GM12878 (cell line): ENCODE measurements at regions of chr11 and their contacts with region 1.

Region 1: GRCh38 chr11:35822815-35823495 is 120.9 kb upstream of the LDLRAD3 start:
- DNase-seq: no peak
- ATAC-seq: no peak
- H3K4me3 ChIP-seq: no peak overlapping the region
- H3K27ac ChIP-seq: no peak overlapping the region
- H3K4me1 ChIP-seq: no peaks in the 10 kb centered on the region
- H3K27me3 ChIP-seq: no peaks in the 10 kb centered on the region
- CTCF ChIP-seq: no peak
- EP300 ChIP-seq: no peak
- POLR2A ChIP-seq: no peak
- RAD21 ChIP-seq: no peak

Region 2: DNA sequence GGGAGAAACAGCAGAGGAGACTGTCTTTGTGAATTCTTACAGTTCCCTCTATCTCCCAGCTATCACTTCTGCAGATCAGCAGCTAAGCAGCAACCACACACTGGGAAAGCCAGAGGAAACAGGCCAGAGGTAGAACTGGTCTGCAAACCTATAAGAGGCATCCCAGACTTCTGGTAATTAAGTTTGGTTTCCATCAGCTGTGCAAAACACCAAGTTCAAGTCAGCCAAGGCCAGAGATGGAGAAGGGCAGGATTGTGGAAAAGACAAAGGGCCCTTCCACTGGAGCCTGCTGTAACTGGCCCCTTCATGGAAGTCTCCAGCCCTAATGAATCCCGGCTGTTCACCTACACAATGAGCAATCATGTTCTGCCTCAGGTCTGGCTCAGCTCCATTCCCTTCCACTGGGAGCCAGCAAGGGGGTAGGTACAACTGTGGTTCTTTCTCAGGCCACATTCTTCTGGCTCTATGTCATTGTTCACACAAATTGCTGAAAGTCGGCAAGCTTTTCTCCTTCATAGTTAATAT is 292.9 kb before region 1 on chr11:
- CTCF ChIA-PET with region 1: no interaction called
- POLR2A ChIA-PET with region 1: no interaction called
- RAD21 ChIA-PET with region 1: no interaction called
- SMC1A ChIA-PET with region 1: no interaction called
- in situ Hi-C with region 1: no loop called
- intact Hi-C with region 1: no loop called
- DNase-seq: no peak
- ATAC-seq: no peak
- H3K4me3 ChIP-seq: no peak overlapping the region
- H3K27ac ChIP-seq: no peak overlapping the region
- H3K4me1 ChIP-seq: no peaks in the 10 kb centered on the region
- H3K27me3 ChIP-seq: peaks cover 4 to 6% of the 10 kb centered on the region in 2 experiments
- CTCF ChIP-seq: no peak
- EP300 ChIP-seq: no peak
- POLR2A ChIP-seq: no peak
- RAD21 ChIP-seq: no peak

Region 3: GRCh38 chr11:35714882-35715627 is 107.9 kb before region 1 on chr11:
- CTCF ChIA-PET with region 1: interaction called, 13 read pairs
- POLR2A ChIA-PET with region 1: no interaction called
- RAD21 ChIA-PET with region 1: interaction called, 20 read pairs
- SMC1A ChIA-PET with region 1: interaction called, 15 read pairs
- in situ Hi-C with region 1: no loop called
- intact Hi-C with region 1: no loop called
- DNase-seq: peak; percentile 77
- ATAC-seq: peak; percentile 91
- H3K4me3 ChIP-seq: no peak overlapping the region
- H3K27ac ChIP-seq: no peak overlapping the region; the same call in 1 of the 2 replicates
- H3K4me1 ChIP-seq: peaks cover 8% of the 10 kb centered on the region; the same call in 1 of the 2 replicates
- H3K27me3 ChIP-seq: no peaks in the 10 kb centered on the region
- CTCF ChIP-seq: no peak
- EP300 ChIP-seq: peak; percentile 47 to 55; a peak in 2 of 4 replicates
- POLR2A ChIP-seq: no peak
- RAD21 ChIP-seq: peak; percentile 13; the same call in 1 of the 2 replicates

Region 4: DNA sequence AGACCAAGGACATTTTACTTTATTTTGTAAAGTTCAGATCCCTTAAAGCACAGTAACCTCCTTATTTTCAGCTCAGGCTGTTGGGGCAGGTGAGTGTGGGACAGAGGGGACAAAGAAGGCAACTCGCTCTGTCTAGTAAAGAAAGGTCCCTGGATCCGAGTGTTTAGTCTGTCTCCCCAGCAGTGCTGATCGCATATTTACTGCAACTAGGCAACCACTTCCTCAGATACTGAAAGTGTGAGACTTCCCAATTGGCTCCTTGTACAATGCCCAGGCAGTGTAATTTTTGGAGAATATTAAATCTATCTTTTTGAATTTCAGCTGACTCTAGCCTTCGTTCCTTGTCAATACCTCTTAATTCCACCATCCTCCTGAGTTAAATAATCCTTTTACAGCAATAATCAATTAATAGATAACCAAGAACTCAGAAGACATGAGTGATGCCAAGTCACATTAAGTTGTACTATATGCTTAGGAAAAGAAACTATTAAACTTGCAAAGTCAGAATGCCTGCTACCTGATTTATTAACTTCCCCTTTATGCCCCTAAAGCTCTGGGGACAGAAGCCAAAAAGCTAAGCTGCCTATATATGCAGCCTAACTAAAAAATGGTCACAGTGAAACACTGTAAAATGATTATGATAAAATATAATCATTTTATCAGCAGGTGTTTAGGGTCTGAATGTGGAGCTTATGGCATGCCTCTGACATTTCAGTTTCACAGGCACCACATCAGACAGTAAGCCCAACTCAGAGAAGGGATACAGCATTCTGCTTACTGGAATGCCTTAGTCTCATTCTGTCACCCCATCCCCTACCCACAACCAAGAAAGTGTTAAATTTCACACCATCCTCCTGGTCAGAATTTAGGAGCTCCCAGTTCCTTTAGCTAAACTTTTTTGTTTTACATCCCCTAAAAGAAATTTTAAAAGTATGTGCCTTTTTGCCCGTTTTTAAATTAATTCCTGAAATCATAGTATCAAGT is 21.7 kb before region 1 on chr11:
- CTCF ChIA-PET with region 1: interaction called, 26 read pairs
- POLR2A ChIA-PET with region 1: no interaction called
- RAD21 ChIA-PET with region 1: interaction called, 12 read pairs
- SMC1A ChIA-PET with region 1: interaction called, 14 read pairs
- in situ Hi-C with region 1: no loop called
- intact Hi-C with region 1: no loop called
- DNase-seq: no peak
- ATAC-seq: peak; percentile 88
- H3K4me3 ChIP-seq: no peak overlapping the region
- H3K27ac ChIP-seq: peak overlapping the region; percentile 6; the same call in 1 of the 2 replicates
- H3K4me1 ChIP-seq: peaks cover 4% of the 10 kb centered on the region
- H3K27me3 ChIP-seq: no peaks in the 10 kb centered on the region
- CTCF ChIP-seq: no peak
- EP300 ChIP-seq: no peak
- POLR2A ChIP-seq: no peak
- RAD21 ChIP-seq: no peak

Region 5: DNA sequence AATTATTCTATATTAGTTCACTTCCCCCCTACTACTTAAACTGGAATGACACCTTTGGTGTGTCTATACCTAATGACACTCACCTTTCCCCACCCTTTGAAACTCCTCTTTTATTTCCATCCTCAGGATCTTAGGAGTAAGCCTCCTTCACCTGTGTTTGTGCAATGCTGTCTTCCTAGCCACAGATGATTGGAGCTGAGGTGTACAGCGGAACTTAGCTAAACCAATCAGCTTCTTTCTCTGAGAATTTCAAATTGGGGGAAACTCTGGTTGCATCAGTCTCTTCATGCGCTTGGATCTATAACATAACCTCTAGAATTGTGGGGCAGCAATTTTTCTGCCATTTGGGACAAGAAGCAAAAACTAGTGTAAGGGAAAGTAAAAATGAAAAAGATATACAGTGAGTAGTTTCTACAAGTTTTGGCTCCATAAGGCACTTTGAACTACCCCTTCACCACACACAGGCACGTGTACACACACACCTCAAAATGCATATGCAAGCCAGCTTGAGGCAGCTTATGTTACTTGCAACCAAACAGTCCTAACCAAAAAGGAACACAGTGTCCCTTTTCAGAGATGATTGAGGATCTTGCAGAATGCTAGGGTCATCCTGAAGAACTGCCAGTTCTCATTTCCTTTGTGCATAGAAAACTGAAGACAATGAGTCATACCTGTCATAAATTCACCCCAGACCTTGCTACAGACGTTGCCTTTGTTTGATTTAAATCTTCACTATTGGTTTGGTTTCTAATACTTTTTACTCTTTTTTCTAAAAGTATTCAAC is 84.9 kb after region 1 on chr11:
- CTCF ChIA-PET with region 1: interaction called, 6 read pairs
- POLR2A ChIA-PET with region 1: no interaction called
- RAD21 ChIA-PET with region 1: interaction called, 5 read pairs
- SMC1A ChIA-PET with region 1: interaction called, 7 read pairs
- in situ Hi-C with region 1: no loop called
- intact Hi-C with region 1: loop called (anchors 5 kb)
- DNase-seq: peak; percentile 64
- ATAC-seq: peak; percentile 73
- H3K4me3 ChIP-seq: no peak overlapping the region
- H3K27ac ChIP-seq: no peak overlapping the region
- H3K4me1 ChIP-seq: peaks cover 33% of the 10 kb centered on the region
- H3K27me3 ChIP-seq: no peaks in the 10 kb centered on the region
- CTCF ChIP-seq: no peak
- EP300 ChIP-seq: peak; percentile 58 to 68; a peak in 2 of 4 replicates
- POLR2A ChIP-seq: no peak
- RAD21 ChIP-seq: no peak; the same call in 1 of the 2 replicates

Region 6: GRCh38 chr11:36037031-36037430 is 214.1 kb after region 1 on chr11:
- CTCF ChIA-PET with region 1: interaction called, 20 read pairs
- POLR2A ChIA-PET with region 1: no interaction called
- RAD21 ChIA-PET with region 1: interaction called, 14 read pairs
- SMC1A ChIA-PET with region 1: interaction called, 26 read pairs
- in situ Hi-C with region 1: no loop called
- intact Hi-C with region 1: no loop called
- DNase-seq: no peak
- ATAC-seq: no peak
- H3K4me3 ChIP-seq: no peak overlapping the region
- H3K27ac ChIP-seq: no peak overlapping the region
- H3K4me1 ChIP-seq: no peaks in the 10 kb centered on the region
- H3K27me3 ChIP-seq: no peaks in the 10 kb centered on the region; a peak in 1 of 4 replicates
- CTCF ChIP-seq: no peak
- EP300 ChIP-seq: no peak
- POLR2A ChIP-seq: no peak
- RAD21 ChIP-seq: no peak

Region 7: DNA sequence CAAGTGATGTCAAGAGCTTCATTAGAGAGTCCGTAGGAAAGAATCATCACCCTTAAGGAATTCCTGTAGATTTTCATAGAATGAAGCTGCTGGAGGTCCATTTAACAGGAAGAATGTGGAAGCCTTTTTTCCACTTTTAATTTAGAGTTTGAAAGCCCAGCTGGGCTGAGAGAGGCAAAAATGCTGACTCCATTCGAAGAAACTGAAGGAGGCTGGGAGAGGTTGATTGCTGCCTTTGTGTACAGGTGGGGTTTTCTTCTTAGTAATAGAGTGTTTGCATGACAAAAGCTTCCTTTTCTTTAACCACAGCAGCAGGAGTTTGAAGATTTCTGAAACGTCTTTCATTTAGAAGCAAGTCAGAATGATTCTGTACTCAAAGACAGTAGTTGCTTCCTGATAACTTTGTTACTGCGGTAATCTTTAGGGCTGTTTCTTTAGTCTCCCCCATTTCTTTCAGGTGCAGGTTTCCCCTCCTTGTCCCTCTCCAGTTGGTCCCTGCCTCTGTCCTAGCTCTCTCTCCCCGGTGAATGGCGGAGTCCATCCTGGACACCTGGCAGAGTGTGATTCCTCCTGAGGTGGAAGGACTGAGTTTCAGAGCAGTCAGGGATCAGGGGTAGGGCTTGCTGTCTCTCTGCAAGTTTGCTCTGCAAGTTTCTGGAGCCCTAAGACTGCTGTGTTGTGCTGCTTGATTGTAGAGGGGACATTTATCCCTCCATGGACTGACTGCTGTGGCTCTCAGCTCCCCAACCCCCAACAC is 287.1 kb after region 1 on chr11:
- CTCF ChIA-PET with region 1: interaction called, 12 read pairs
- POLR2A ChIA-PET with region 1: no interaction called
- RAD21 ChIA-PET with region 1: interaction called, 4 read pairs
- SMC1A ChIA-PET with region 1: interaction called, 4 read pairs
- in situ Hi-C with region 1: no loop called
- intact Hi-C with region 1: no loop called
- DNase-seq: no peak
- ATAC-seq: peak; percentile 69
- H3K4me3 ChIP-seq: no peak overlapping the region
- H3K27ac ChIP-seq: no peak overlapping the region
- H3K4me1 ChIP-seq: no peaks in the 10 kb centered on the region; the same call in 1 of the 2 replicates
- H3K27me3 ChIP-seq: no peaks in the 10 kb centered on the region
- CTCF ChIP-seq: no peak
- EP300 ChIP-seq: no peak
- POLR2A ChIP-seq: no peak
- RAD21 ChIP-seq: no peak

Region 8: GRCh38 chr11:36258730-36259360 is 435.9 kb after region 1 on chr11:
- CTCF ChIA-PET with region 1: interaction called, 51 read pairs
- POLR2A ChIA-PET with region 1: no interaction called
- RAD21 ChIA-PET with region 1: interaction called, 26 read pairs
- SMC1A ChIA-PET with region 1: interaction called, 6 read pairs
- in situ Hi-C with region 1: no loop called
- intact Hi-C with region 1: no loop called
- DNase-seq: no peak
- ATAC-seq: peak; percentile 87
- H3K4me3 ChIP-seq: no peak overlapping the region
- H3K27ac ChIP-seq: no peak overlapping the region
- H3K4me1 ChIP-seq: no peaks in the 10 kb centered on the region
- H3K27me3 ChIP-seq: no peaks in the 10 kb centered on the region; a peak in 1 of 4 replicates
- CTCF ChIP-seq: peak; percentile 42 to 45 (median 43); a peak in 5 of 6 replicates
- EP300 ChIP-seq: no peak
- POLR2A ChIP-seq: no peak
- RAD21 ChIP-seq: peak; percentile 62